ENCODE measurements at regions of chr2 and their contacts with region 1.

Region 1: GRCh38 chr2:206143451-206143850 is 15.8 kb downstream of the NDUFS1 start:
- DNase-seq: no peak
- ATAC-seq: no peak
- H3K4me3 ChIP-seq: no peak overlapping the region
- H3K27ac ChIP-seq: no peak overlapping the region
- H3K4me1 ChIP-seq: no peaks in the 10 kb centered on the region
- H3K27me3 ChIP-seq: no peaks in the 10 kb centered on the region
- CTCF ChIP-seq: no peak

Region 2: DNA sequence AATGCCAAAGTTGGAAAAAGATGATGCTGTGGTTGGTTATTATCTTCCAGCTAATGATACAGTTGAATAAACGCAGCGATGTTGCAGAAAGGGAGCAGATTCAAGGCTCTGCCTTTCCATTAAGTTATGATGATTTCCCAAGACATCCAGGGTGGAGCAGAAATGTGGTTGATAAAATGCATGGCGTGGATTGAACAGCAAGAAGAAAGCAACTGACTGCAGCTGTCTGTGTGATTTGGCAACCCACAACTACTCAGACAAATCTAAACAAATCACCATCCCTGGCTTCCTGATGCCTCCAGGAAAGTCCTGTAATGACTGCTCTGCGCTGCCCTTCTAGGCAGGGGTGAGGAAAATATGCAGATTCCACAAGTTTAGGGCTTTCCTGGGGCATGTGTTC is 294.9 kb before region 1 on chr2:
- intact Hi-C with region 1: no loop called
- DNase-seq: no peak
- ATAC-seq: no peak
- H3K4me3 ChIP-seq: no peak overlapping the region
- H3K27ac ChIP-seq: no peak overlapping the region
- H3K4me1 ChIP-seq: no peaks in the 10 kb centered on the region
- H3K27me3 ChIP-seq: no peaks in the 10 kb centered on the region
- CTCF ChIP-seq: no peak

Region 3: GRCh38 chr2:206004004-206004693 is 139.3 kb before region 1 on chr2:
- intact Hi-C with region 1: loop called in 1 of 2 experiments (anchors 10 kb)
- DNase-seq: no peak
- ATAC-seq: peak in 1 of 4 donors; percentile 38
- H3K4me3 ChIP-seq: no peak overlapping the region
- H3K27ac ChIP-seq: no peak overlapping the region
- H3K4me1 ChIP-seq: no peaks in the 10 kb centered on the region
- H3K27me3 ChIP-seq: no peaks in the 10 kb centered on the region
- CTCF ChIP-seq: no peak